ENCODE measurements at regions of chr22 and their contacts with region 1.

Region 1: DNA sequence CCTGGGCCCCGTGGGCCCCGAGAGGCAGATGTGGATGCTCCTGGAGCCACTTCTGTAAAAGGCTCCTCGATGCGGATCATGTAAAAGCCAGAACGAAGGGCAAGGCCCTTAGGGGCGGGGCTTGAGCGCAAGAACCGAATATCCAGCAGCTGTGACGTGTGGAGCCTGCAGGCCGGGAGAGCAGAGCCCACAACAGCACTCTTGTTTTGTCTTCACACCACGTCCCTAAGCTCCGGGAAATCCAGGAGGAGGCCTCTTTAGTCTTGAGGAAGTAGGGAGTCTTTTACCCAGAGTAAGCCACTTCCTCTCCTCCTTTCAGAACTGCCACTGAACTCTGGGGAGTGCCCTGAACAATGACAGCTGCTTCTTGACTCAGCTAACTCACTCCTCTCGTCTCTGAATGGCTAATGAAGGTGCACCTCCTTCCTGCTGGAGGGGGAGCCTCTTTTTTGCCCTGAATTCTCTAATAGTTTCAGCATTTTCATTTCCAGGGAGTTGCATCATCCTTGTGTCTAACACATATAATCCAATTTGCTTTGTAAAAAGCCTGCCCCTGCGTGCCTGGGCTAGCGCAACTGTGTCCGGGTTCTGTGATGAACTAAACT is 12.5 kb downstream of the L3MBTL2 start:
- DNase-seq: no peak
- H3K4me3 ChIP-seq: no peak overlapping the region
- H3K27ac ChIP-seq: peak overlapping the region; percentile 9
- H3K4me1 ChIP-seq: peaks cover 12% of the 10 kb centered on the region
- H3K27me3 ChIP-seq: no peaks in the 10 kb centered on the region
- CTCF ChIP-seq: no peak

Region 2: DNA sequence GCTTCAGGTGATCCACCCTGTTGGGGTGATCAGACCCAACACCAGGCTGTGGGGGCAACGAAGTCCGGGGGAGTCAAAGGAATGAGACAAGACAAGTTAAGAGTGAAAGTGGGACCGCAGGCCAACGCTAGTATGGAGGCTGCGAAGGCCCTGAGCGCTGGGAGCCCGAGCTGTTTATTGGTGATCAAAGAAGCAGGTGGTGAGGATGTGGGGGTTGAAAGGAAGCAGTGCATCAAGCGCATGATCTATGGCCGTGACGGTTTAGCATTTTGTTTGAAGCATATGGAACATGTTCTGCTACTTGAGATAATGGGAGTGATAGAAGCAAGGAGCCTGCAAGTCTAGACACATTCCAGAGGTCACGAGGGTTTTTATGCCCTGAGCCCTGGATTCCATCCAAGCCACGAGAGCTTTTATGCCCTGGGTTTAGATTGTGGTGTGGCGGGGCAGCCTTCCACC is 488.9 kb before region 1 on chr22:
- CTCF ChIA-PET with region 1: no interaction called
- dilution Hi-C with region 1: no loop called
- in situ Hi-C with region 1: no loop called
- intact Hi-C with region 1: no loop called
- DNase-seq: peak; percentile 68
- H3K4me3 ChIP-seq: no peak overlapping the region
- H3K27ac ChIP-seq: no peak overlapping the region
- H3K4me1 ChIP-seq: peaks cover 30% of the 10 kb centered on the region
- H3K27me3 ChIP-seq: no peaks in the 10 kb centered on the region
- CTCF ChIP-seq: no peak

Region 3: DNA sequence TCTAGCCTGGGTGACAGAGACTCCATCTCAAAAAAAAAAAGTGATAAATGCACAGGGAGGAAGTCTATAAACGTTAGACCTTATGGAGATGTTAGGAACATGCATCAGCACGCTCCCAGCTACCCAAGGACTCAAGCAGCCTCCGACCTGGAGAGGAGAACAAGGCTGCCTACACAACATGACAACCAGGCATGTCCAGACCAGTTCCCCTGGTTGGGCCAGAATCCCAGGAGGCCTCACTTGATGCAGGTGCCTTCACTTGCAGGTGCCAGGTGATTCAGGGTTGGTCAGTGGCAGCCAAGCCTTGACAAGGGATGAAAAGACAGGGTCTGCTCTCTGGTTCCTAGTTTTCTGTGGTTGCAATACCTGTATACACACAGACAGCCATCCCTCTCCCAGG is 62.4 kb after region 1 on chr22:
- CTCF ChIA-PET with region 1: no interaction called
- dilution Hi-C with region 1: no loop called
- in situ Hi-C with region 1: no loop called
- intact Hi-C with region 1: loop called (anchors 5 kb)
- DNase-seq: peak; percentile 99
- H3K4me3 ChIP-seq: no peak overlapping the region
- H3K27ac ChIP-seq: no peak overlapping the region
- H3K4me1 ChIP-seq: peaks cover 40% of the 10 kb centered on the region
- H3K27me3 ChIP-seq: no peaks in the 10 kb centered on the region
- CTCF ChIP-seq: no peak

Region 4: DNA sequence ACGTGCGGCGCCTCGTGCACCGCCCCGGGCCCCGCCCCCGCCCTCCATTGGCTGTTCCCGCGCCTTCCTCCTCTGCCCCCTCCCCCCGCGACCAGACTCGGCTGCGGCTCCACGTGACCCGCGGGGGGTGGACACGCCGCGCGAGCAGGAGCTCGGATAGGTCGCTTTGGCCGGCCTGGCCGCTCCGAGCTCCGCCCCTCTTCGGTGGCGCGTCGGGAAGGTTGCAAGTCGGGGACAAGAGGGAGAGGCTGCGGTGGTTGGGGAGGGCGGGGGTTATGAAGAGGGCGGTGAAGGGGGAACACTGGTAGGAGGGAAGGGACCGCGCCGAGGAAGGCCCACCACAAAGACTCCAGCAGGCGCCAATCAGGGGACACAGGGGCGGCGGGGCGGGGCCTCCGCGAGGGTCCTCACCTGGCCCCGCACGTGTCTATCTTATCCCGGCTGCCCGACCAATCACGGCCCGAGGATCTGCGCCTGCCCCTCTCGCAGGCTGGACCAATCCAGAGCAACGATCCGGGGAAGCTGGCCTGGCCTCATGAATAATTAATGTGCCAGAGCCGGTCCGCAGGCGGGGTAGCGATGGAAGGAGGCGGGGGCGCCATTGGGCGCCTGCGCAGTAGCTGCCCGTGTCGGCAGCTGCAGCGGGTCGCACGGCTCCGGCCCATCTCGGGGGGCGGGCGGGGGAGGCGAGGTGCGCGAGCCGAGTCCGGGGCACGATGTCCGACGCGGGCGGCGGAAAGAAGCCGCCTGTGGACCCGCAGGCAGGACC is 163.9 kb after region 1 on chr22 and contains the start of gene TEF:
- CTCF ChIA-PET with region 1: no interaction called
- dilution Hi-C with region 1: no loop called
- in situ Hi-C with region 1: no loop called
- intact Hi-C with region 1: no loop called
- DNase-seq: peak; percentile 98
- H3K4me3 ChIP-seq: peak within 1 kb of the TSS; percentile 65 to 78 (median 65)
- H3K27ac ChIP-seq: peak within 1 kb of the TSS; percentile 89
- H3K4me1 ChIP-seq: peaks cover 24% of the 10 kb centered on the region
- H3K27me3 ChIP-seq: no peaks in the 10 kb centered on the region
- CTCF ChIP-seq: no peak
- total RNA-seq, gene TEF: 5.2 TPM

Region 5: GRCh38 chr22:41448189-41448808 is 230.6 kb after region 1 on chr22:
- CTCF ChIA-PET with region 1: no interaction called
- dilution Hi-C with region 1: no loop called
- in situ Hi-C with region 1: no loop called
- intact Hi-C with region 1: no loop called
- DNase-seq: peak; percentile 99
- H3K4me3 ChIP-seq: peak overlapping the region; percentile 76 to 86 (median 81)
- H3K27ac ChIP-seq: peak overlapping the region; percentile 82
- H3K4me1 ChIP-seq: peaks cover 4% of the 10 kb centered on the region
- H3K27me3 ChIP-seq: no peaks in the 10 kb centered on the region
- CTCF ChIP-seq: no peak

Region 6: DNA sequence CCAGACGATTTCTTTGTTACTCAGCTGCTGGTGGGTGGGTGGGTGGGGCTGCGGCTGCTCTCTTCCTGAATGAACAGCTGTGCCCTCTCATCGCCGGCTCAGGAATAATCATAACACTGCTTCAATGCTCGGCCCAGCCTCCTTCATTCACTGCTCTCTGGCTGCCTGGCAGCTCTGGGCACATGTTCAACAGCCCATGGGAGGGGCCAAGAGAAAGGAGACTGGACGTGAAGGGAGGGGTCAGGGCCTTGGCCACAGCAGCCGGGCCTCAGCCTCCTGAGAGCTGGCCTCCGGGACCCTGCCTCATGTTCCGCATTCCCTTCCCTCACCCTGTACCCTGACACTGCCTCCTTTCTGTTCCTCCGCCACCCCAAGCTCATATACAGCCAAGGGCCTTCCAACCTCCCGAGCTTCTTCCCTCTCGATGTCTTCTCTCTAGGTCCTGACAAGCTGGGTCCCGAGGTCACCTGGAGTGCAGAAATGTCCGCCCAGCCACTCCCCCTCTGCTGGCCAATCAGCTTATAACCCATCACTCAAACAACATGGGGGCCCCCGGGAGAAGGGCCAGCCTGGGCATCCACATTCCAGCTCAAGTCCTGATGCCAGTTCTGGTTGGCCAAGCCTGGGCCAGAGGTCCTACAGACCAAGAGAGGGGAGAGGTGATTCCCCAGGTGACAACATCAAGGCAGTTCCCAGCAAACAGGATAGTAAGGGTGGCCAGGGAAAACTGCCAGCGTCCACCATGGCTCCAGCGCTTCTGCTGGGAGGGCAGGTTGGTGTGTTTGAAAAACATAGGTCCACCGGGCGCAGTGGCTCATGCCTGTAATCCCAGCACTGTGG is 340.0 kb after region 1 on chr22:
- CTCF ChIA-PET with region 1: no interaction called
- dilution Hi-C with region 1: no loop called
- in situ Hi-C with region 1: no loop called
- intact Hi-C with region 1: no loop called
- DNase-seq: peak; percentile 73
- H3K4me3 ChIP-seq: no peak overlapping the region
- H3K27ac ChIP-seq: no peak overlapping the region
- H3K4me1 ChIP-seq: peaks cover 4% of the 10 kb centered on the region
- H3K27me3 ChIP-seq: no peaks in the 10 kb centered on the region
- CTCF ChIP-seq: no peak